Right cardiac atrium (tissue), 5 donors: ENCODE measurements at regions of chr12 and their contacts with region 1.

Region 1: DNA sequence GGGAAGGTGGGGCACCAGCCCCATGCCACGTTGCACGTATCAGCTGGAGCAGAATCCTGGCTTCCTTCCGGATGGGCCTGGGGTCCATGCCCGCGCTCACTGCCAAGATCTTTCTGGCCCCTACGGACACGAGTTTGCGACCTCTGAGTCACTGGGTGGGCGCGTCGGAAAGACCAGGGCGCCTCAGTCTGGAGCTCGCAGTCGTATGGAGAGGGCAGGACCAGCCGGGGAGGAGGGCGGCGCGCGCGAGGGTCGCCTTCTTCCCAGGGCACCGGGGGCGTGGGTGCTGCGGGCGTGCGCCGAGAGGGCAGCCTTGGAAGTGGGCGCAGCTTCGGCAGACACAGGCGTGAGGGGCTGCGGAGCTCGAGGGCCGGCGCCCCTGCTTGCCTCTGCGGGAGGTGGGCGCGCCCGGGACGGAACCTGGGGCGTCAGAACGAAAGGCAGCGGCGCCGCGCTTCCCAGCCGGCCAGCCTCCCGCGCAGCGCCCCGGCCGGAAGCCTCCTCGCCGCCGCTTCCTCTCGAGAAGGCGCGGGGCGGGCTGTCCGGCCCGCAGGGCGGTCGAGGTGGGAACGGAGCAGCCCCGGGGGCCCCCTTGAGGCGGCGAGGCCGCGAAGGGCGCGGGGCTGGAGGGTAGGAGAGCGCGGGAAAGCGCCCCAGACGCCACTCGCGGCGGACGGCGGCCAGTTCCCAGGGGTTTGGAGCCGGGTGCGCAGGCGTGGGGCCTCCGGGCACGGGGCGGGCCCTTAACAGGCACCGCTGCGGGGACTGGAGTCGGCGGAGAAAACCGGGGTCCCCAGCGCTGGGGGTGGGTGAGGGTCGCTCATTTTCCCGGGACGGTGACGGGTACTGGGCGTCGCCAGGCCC is at the start of gene ARL6IP4:
- DNase-seq: peak; percentile 67 to 88 (median 87)
- ATAC-seq: peak; percentile 74 to 76
- H3K4me3 ChIP-seq: peak within 1 kb of the TSS; percentile 75
- H3K27ac ChIP-seq: peak within 1 kb of the TSS; percentile 43
- H3K4me1 ChIP-seq: peaks cover 6% of the 10 kb centered on the region
- H3K27me3 ChIP-seq: no peaks in the 10 kb centered on the region
- total RNA-seq, gene ARL6IP4: 158 to 185 (median 168) TPM

Region 2: GRCh38 chr12:122726080-122726558 is 254.3 kb before region 1 on chr12:
- intact Hi-C with region 1: no loop called
- DNase-seq: no peak
- ATAC-seq: no peak
- H3K4me3 ChIP-seq: no peak overlapping the region
- H3K27ac ChIP-seq: no peak overlapping the region
- H3K4me1 ChIP-seq: no peaks in the 10 kb centered on the region
- H3K27me3 ChIP-seq: no peaks in the 10 kb centered on the region

Region 3: GRCh38 chr12:123242116-123242904 is 261.9 kb after region 1 on chr12:
- intact Hi-C with region 1: loop called in 2 of 4 experiments (anchors 5 to 10 kb)
- DNase-seq: peak in 1 of 3 donors; percentile 14
- ATAC-seq: peak; percentile 70 to 82
- H3K4me3 ChIP-seq: no peak overlapping the region
- H3K27ac ChIP-seq: peak overlapping the region; percentile 34
- H3K4me1 ChIP-seq: peaks cover 6% of the 10 kb centered on the region
- H3K27me3 ChIP-seq: no peaks in the 10 kb centered on the region